Transverse colon (tissue), 4 donors: ENCODE measurements at regions of chr2 and their contacts with region 1.

Region 1: DNA sequence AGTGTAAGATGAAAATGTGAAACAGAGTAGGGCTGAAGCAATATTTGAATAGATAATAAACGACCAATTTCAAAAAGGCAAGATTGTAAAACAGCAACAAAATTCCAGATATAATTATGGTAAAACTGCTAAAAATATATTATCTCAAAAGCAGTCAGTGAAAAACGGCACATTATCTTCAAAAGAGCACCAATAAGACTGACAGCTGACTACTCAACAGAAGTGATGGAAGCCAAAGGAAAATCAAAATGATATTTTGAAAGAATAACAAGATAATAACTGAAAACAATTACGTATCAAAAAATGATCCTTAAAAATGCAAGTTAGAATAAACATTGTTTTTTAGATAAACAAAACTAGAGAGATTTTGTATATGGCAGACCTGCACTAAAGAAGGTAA is 920.6 kb upstream of the FAM98A start:
- DNase-seq: no peak
- H3K4me3 ChIP-seq: no peak overlapping the region
- H3K27ac ChIP-seq: no peak overlapping the region
- H3K4me1 ChIP-seq: no peaks in the 10 kb centered on the region
- H3K27me3 ChIP-seq: no peaks in the 10 kb centered on the region
- CTCF ChIP-seq: no peak
- EP300 ChIP-seq: no peak
- POLR2A ChIP-seq: no peak

Region 2: GRCh38 chr2:34474646-34475045 is 45.0 kb before region 1 on chr2:
- in situ Hi-C with region 1: loop called in 1 of 4 experiments (anchors 5 kb)
- intact Hi-C with region 1: no loop called
- DNase-seq: no peak
- H3K4me3 ChIP-seq: no peak overlapping the region
- H3K27ac ChIP-seq: no peak overlapping the region
- H3K4me1 ChIP-seq: no peaks in the 10 kb centered on the region
- H3K27me3 ChIP-seq: no peaks in the 10 kb centered on the region
- CTCF ChIP-seq: no peak
- EP300 ChIP-seq: no peak
- POLR2A ChIP-seq: no peak

Region 3: GRCh38 chr2:35184471-35184870 is 664.8 kb after region 1 on chr2:
- in situ Hi-C with region 1: no loop called
- intact Hi-C with region 1: no loop called
- DNase-seq: no peak
- H3K4me3 ChIP-seq: no peak overlapping the region
- H3K27ac ChIP-seq: no peak overlapping the region
- H3K4me1 ChIP-seq: no peaks in the 10 kb centered on the region
- H3K27me3 ChIP-seq: no peaks in the 10 kb centered on the region
- CTCF ChIP-seq: no peak
- EP300 ChIP-seq: no peak
- POLR2A ChIP-seq: no peak